CD4-positive, alpha-beta T cell (primary cell): ENCODE measurements at regions of chr5 and their contacts with region 1.

Region 1: DNA sequence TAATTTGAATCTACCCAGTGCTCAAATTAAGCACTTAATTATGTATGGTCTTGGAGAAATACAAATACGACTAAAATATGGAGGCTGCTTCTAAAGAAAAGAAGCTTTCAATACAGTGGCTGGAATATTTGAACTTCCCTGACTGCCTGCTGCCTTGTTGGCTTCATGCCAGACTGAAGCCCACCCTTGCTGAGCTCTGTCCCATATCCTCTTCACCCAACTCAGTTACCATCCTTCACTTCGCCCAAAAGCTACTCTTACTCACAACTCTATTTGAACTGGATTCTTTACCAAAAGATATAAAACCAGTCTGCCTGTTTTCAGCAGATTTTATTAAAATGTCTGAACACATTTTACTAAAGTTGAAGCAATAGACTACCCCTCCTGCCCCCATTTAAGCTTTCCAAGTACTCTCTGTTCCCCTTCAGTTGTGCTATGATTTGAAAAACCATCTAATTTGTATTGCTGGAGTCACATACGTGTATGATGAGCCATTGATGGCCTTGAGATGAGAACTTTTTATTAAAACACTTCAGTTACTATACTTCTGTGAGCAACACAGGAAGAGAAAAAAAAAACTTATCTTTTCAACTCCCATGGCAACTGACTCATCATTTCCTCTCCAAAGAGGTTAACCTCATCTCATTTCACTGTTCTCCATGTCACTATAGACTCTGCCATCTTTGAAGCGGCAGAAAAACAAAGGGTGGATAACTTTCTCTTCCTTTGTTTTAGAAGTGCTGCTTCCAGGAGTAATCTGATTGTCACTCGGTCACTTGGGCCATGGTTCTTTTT is 104.1 kb upstream of the PCSK1 start:
- DNase-seq: peak in 4 of 14 experiments; percentile 8 to 87 (median 78)
- ATAC-seq: peak; percentile 96
- H3K4me3 ChIP-seq: no peak overlapping the region
- H3K4me3 Mint-ChIP-seq: peak overlapping the region; percentile 31
- H3K27ac ChIP-seq: peak overlapping the region; percentile 39 to 56
- H3K27ac Mint-ChIP-seq: peak overlapping the region; percentile 73
- H3K4me1 ChIP-seq: peaks cover 14% of the 10 kb centered on the region
- H3K4me1 Mint-ChIP-seq: peaks cover 32% of the 10 kb centered on the region
- H3K27me3 ChIP-seq: no peaks in the 10 kb centered on the region
- H3K27me3 Mint-ChIP-seq: no peaks in the 10 kb centered on the region
- CTCF ChIP-seq: no peak

Region 2: DNA sequence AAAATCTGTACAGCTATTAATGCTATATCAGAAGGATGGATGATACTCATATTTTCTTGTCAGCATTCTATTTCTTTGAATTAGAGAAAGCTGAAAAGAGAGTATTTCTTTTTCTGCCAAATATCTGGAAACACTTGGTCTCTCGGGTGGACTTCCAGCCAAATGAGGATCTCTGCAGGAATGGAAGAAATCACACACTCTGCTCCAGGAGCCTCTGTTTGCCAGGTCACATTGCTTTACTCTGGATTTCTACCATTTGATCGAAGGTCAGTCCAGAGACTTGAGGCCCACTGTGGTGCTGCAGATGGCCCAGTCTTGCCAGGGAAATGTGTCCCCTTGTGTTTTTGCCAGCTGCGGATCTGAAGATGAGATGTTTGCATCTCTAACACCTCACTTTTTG is 258.2 kb before region 1 on chr5:
- CTCF ChIA-PET with region 1: no interaction called
- POLR2A ChIA-PET with region 1: no interaction called
- intact Hi-C with region 1: no loop called
- DNase-seq: no peak
- ATAC-seq: no peak
- H3K4me3 ChIP-seq: no peak overlapping the region
- H3K4me3 Mint-ChIP-seq: no peak overlapping the region
- H3K27ac ChIP-seq: no peak overlapping the region
- H3K27ac Mint-ChIP-seq: no peak overlapping the region
- H3K4me1 ChIP-seq: no peaks in the 10 kb centered on the region
- H3K4me1 Mint-ChIP-seq: peaks cover 7% of the 10 kb centered on the region
- H3K27me3 ChIP-seq: no peaks in the 10 kb centered on the region
- H3K27me3 Mint-ChIP-seq: peaks cover 23% of the 10 kb centered on the region
- CTCF ChIP-seq: no peak

Region 3: DNA sequence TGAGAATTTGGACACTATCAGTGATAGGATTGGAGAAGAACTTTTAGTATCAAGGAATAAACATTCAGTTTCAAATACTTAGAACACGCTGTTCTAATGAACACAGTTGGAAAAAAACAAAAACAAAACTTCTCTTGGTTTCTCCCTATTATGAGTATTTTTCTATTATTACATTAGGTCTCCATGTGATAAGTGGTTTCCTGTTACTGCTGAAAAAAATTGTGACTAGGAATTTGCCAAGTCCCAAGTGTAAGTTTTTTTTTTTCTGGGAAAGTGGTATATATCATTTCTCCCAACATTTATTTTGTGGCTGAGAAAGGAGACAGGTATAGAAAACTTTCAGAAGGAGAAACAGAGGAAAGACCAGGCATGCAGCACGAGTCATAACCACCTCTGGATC is 145.3 kb before region 1 on chr5:
- CTCF ChIA-PET with region 1: no interaction called
- POLR2A ChIA-PET with region 1: no interaction called
- intact Hi-C with region 1: no loop called
- DNase-seq: no peak
- ATAC-seq: no peak
- H3K4me3 ChIP-seq: no peak overlapping the region
- H3K4me3 Mint-ChIP-seq: no peak overlapping the region
- H3K27ac ChIP-seq: no peak overlapping the region
- H3K27ac Mint-ChIP-seq: no peak overlapping the region
- H3K4me1 ChIP-seq: no peaks in the 10 kb centered on the region
- H3K4me1 Mint-ChIP-seq: no peaks in the 10 kb centered on the region
- H3K27me3 ChIP-seq: peaks cover 4% of the 10 kb centered on the region in 2 experiments
- H3K27me3 Mint-ChIP-seq: peaks cover 20% of the 10 kb centered on the region
- CTCF ChIP-seq: no peak

Region 4: DNA sequence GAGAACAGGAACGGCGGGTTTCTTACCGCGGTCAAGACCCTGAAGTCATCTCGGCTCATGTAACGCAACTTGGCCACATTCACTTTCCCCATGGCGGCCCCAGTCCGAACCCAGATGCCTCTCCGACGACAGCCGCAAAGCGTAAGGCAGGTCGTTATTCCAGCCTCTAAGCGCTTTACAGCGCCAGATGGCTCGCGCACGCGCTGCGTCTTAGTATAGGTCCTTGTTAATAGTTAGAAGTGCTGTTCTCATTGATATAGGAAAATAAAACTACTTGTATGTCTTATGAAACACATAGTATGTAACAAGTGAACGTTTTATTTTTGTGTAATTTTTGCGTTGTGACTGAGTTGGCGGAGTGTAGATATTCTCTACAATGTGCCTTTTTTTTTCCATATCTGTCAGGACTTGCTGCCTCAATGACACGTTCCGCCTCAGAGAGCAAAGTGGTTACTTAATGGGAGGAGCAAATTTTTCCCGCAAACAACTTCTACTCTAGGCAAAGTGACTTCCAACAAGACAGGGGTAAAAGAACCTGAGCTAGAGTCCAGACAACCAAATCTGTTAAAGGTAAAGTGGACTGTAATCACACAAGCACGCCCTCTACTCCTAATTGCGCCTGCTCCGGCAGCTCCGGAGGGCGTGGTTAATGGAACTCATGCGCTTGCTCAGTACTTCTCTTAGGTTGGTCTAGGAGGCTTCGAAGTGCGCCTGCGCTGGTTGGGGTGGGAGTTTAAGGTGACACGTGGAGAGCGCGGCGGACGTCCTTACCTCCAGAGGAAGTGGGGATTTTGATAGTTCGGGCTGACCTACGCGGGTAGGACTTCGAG is 646.1 kb after region 1 on chr5 and contains the start of gene RIOK2:
- CTCF ChIA-PET with region 1: no interaction called
- POLR2A ChIA-PET with region 1: no interaction called
- intact Hi-C with region 1: loop called in 1 of 2 experiments (anchors 10 kb)
- DNase-seq: peak; percentile 81 to 96 (median 90)
- ATAC-seq: peak; percentile 91
- H3K4me3 ChIP-seq: peak within 1 kb of the TSS; percentile 73
- H3K4me3 Mint-ChIP-seq: peak within 1 kb of the TSS; percentile 97
- H3K27ac ChIP-seq: peak within 1 kb of the TSS; percentile 90 to 96
- H3K27ac Mint-ChIP-seq: peak within 1 kb of the TSS; percentile 98
- H3K4me1 ChIP-seq: peaks cover 11% of the 10 kb centered on the region
- H3K4me1 Mint-ChIP-seq: peaks cover 44% of the 10 kb centered on the region
- H3K27me3 ChIP-seq: no peaks in the 10 kb centered on the region
- H3K27me3 Mint-ChIP-seq: no peaks in the 10 kb centered on the region
- CTCF ChIP-seq: no peak
- total RNA-seq, gene RIOK2: 25.1 to 26.0 TPM